Mammary epithelial cell (primary cell): ENCODE measurements at regions of chr7 and their contacts with region 1.

Region 1: GRCh38 chr7:129989466-129989865 is 36.7 kb upstream of the UBE2H start:
- DNase-seq: peak; percentile 24
- H3K4me3 ChIP-seq: no peak overlapping the region
- H3K27ac ChIP-seq: no peak overlapping the region
- H3K4me1 ChIP-seq: no peaks in the 10 kb centered on the region
- H3K27me3 ChIP-seq: no peaks in the 10 kb centered on the region
- CTCF ChIP-seq: no peak

Region 2: GRCh38 chr7:129940329-129940728 is 49.1 kb before region 1 on chr7:
- CTCF ChIA-PET with region 1: no interaction called
- dilution Hi-C with region 1: no loop called
- in situ Hi-C with region 1: no loop called
- intact Hi-C with region 1: no loop called
- DNase-seq: no peak
- H3K4me3 ChIP-seq: no peak overlapping the region
- H3K27ac ChIP-seq: no peak overlapping the region
- H3K4me1 ChIP-seq: no peaks in the 10 kb centered on the region
- H3K27me3 ChIP-seq: no peaks in the 10 kb centered on the region
- CTCF ChIP-seq: no peak

Region 3: GRCh38 chr7:129969807-129970446 is 19.5 kb before region 1 on chr7:
- CTCF ChIA-PET with region 1: no interaction called
- dilution Hi-C with region 1: no loop called
- in situ Hi-C with region 1: no loop called
- intact Hi-C with region 1: loop called (anchors 2 kb)
- DNase-seq: peak; percentile 98
- H3K4me3 ChIP-seq: peak overlapping the region in 1 of 3 experiments; percentile 14
- H3K27ac ChIP-seq: peak overlapping the region; percentile 96
- H3K4me1 ChIP-seq: peaks cover 21% of the 10 kb centered on the region
- H3K27me3 ChIP-seq: no peaks in the 10 kb centered on the region
- CTCF ChIP-seq: no peak